ENCODE measurements at regions of chr7 and their contacts with region 1.

Region 1: GRCh38 chr7:42237162-42237821 is at the start of gene GLI3:
- DNase-seq: peak; percentile 84
- H3K4me3 ChIP-seq: peak within 1 kb of the TSS; percentile 66 to 70
- H3K27ac ChIP-seq: peak within 1 kb of the TSS; percentile 87
- H3K4me1 ChIP-seq: peaks cover 3% of the 10 kb centered on the region
- H3K27me3 ChIP-seq: no peaks in the 10 kb centered on the region
- CTCF ChIP-seq: peak in 2 of 4 experiments; percentile 28 to 29
- POLR2A ChIP-seq: peak; percentile 63
- total RNA-seq, gene GLI3: 9.2 to 14.7 TPM

Region 2: DNA sequence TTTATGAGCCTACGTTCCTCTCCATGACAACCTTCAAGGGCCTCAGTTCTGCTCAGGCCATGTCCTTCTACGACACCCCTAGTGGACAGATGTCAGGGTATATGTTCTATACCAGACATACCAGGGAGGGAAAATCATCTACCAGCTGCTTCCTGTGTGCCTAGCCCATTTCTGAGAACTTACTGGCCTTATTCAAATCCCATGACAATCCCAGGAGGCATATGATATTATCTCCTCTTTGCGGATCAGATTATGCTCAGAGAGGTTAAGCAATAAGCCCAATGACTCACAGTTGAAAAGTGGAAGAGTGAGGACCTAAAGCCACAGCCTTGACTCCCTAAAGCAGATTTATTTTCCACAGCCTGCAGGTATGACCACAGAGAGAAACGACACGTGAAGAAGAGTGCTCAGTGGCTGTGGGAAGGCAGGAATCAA is 139.5 kb before region 1 on chr7:
- intact Hi-C with region 1: loop called (anchors 10 kb)
- DNase-seq: no peak
- H3K4me3 ChIP-seq: no peak overlapping the region
- H3K27ac ChIP-seq: no peak overlapping the region
- H3K4me1 ChIP-seq: no peaks in the 10 kb centered on the region
- H3K27me3 ChIP-seq: no peaks in the 10 kb centered on the region
- CTCF ChIP-seq: no peak
- POLR2A ChIP-seq: no peak

Region 3: DNA sequence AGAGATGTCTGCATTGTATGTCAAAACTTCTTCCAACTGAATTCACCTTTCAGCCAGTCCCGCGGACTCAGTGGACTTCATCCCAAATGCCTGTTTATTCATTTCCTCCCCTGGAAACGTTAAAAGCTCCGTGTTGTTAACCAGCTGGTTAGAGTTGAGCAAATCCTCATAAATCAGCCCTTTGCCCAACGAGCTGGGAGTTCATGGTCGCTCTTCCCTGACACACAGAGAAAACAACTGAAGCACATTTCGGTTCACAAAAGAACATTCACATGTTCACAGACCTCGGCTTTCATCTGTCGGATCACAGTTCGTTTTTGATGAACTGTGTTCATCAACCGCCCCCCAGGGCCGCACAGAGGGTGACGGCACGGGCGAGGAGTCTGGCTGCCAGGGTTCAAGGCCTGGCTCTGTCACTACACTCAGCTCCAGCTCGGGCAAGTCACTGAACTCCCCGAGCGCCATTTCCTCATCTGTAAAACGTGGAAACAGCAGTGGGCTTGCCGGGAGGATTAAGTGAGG is 62.8 kb before region 1 on chr7:
- intact Hi-C with region 1: loop called (anchors 5 kb)
- DNase-seq: no peak
- H3K4me3 ChIP-seq: no peak overlapping the region
- H3K27ac ChIP-seq: peak overlapping the region; percentile 38 to 58
- H3K4me1 ChIP-seq: no peaks in the 10 kb centered on the region
- H3K27me3 ChIP-seq: no peaks in the 10 kb centered on the region
- CTCF ChIP-seq: no peak
- POLR2A ChIP-seq: no peak

Region 4: GRCh38 chr7:42493436-42494238 is 256.3 kb after region 1 on chr7:
- intact Hi-C with region 1: loop called (anchors 5 kb)
- DNase-seq: peak; percentile 69
- H3K4me3 ChIP-seq: peak overlapping the region; percentile 22 to 32
- H3K27ac ChIP-seq: peak overlapping the region in 1 of 2 donors; percentile 35
- H3K4me1 ChIP-seq: no peaks in the 10 kb centered on the region
- H3K27me3 ChIP-seq: peaks cover 2% of the 10 kb centered on the region
- CTCF ChIP-seq: peak in 1 of 4 experiments; percentile 4
- POLR2A ChIP-seq: no peak

Region 5: GRCh38 chr7:42690794-42691639 is 453.7 kb after region 1 on chr7:
- intact Hi-C with region 1: loop called (anchors 10 kb)
- DNase-seq: peak; percentile 21
- H3K4me3 ChIP-seq: no peak overlapping the region
- H3K27ac ChIP-seq: no peak overlapping the region
- H3K4me1 ChIP-seq: no peaks in the 10 kb centered on the region
- H3K27me3 ChIP-seq: no peaks in the 10 kb centered on the region
- CTCF ChIP-seq: peak in 3 of 4 experiments; percentile 32 to 62 (median 55)
- POLR2A ChIP-seq: no peak

Region 6: DNA sequence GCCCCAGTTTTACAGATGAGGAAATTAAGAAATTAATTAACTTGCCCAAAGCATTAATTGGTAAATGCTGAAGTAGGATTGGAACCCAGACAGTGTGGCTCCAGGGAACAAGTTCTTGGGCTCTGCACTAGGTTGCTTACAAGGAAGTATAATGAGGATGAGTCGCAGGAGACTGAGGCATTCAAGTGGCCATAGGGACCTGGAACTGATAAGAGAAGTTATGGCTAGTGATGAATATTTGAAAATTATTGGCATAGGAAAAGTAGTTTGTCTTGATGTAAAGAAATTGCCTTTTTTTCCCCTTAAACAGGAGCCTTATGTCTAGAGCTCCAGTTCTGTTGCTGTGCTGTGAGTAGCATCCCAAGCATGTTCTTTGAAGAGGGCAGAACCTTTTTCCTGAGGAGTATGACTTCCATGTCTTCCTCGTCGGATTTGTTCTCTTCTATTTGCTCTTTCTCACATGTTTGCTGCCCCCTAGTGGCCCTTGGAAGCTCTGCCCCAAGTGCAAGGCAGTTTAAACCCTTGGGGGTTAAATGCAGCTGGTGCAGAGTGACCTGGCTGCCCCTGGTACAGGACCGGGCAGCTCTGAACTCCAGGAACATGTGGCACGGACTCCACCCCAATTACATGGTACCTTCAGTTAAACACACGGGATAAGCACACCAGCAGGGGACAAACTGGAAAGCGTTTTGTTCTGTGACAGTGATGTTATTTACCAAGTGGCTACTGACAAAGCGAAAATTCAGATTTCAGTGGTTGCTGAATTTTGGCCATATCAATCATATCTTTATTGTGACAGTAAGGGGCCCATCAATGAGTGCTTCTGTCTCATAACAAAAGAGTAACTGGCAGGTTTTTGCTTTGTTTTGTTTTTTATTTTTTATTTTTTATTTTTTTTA is 1023.9 kb after region 1 on chr7:
- intact Hi-C with region 1: no loop called
- DNase-seq: peak; percentile 65
- H3K4me3 ChIP-seq: no peak overlapping the region
- H3K27ac ChIP-seq: no peak overlapping the region
- H3K4me1 ChIP-seq: no peaks in the 10 kb centered on the region
- H3K27me3 ChIP-seq: no peaks in the 10 kb centered on the region
- CTCF ChIP-seq: peak; percentile 61 to 90 (median 73)
- POLR2A ChIP-seq: no peak